ENCODE measurements at regions of chr1 and their contacts with region 1.

Region 1: DNA sequence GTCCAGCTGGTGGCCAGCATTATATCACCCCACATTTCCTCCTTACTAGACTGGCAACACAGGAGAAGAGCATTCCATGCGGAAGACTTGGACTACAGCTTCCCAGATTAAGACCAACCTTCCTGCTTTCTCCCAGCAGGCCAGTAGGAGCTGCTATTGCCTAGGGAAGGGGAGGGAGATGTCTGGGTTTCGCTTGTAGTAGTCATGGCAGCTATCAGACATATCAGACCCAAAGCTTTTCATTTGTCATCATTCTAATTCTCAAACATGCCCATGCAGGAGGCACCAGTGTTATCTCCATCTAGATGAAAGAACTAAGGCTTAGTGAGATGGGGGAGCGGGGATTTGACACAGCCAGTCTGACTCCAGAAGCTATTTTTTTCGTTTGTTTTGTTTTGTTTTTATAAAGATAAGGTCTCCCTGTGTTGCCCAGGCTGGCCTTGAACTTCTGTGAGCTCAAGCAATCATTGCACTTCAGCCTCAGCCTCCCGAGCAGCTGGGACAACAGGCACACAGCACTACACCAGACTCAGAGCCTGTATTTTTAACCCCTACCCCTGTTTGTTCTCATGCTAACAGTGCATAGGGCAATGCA is 4.5 kb downstream of the PLA2G2A start:
- DNase-seq: peak; percentile 86
- H3K4me3 ChIP-seq: no peak overlapping the region
- H3K27ac ChIP-seq: no peak overlapping the region
- H3K4me1 ChIP-seq: peaks cover 6% of the 10 kb centered on the region
- H3K27me3 ChIP-seq: no peaks in the 10 kb centered on the region
- CTCF ChIP-seq: peak; percentile 100

Region 2: DNA sequence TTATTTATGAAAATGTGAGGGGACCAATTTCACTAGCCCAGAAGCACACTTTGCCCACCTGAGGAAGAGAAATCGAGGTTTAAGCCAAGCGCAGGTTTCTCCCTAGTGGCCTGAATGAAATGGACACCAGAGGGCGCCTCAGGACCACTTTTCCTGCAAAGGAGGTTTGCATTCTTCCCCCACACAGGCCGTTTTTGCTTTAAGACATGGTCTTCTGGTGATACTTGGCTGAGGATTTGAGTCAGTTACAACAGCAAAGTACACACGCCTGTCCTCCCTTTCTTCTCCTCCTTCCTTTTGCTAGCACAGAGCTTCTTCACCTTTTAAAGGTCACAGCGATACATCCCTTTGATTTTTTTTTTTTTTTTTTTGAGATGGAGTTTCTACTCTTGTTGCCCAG is 56.9 kb before region 1 on chr1:
- CTCF ChIA-PET with region 1: no interaction called
- dilution Hi-C with region 1: no loop called
- in situ Hi-C with region 1: no loop called
- intact Hi-C with region 1: loop called (anchors 1 kb)
- DNase-seq: peak; percentile 60
- H3K4me3 ChIP-seq: no peak overlapping the region
- H3K27ac ChIP-seq: no peak overlapping the region
- H3K4me1 ChIP-seq: no peaks in the 10 kb centered on the region
- H3K27me3 ChIP-seq: no peaks in the 10 kb centered on the region
- CTCF ChIP-seq: peak; percentile 90 to 95

Region 3: GRCh38 chr1:20093940-20094391 is 119.0 kb after region 1 on chr1:
- CTCF ChIA-PET with region 1: no interaction called
- dilution Hi-C with region 1: no loop called
- in situ Hi-C with region 1: loop called in 1 of 2 experiments (anchors 10 kb)
- intact Hi-C with region 1: no loop called
- DNase-seq: no peak
- H3K4me3 ChIP-seq: no peak overlapping the region
- H3K27ac ChIP-seq: no peak overlapping the region
- H3K4me1 ChIP-seq: no peaks in the 10 kb centered on the region
- H3K27me3 ChIP-seq: no peaks in the 10 kb centered on the region
- CTCF ChIP-seq: no peak

Region 4: DNA sequence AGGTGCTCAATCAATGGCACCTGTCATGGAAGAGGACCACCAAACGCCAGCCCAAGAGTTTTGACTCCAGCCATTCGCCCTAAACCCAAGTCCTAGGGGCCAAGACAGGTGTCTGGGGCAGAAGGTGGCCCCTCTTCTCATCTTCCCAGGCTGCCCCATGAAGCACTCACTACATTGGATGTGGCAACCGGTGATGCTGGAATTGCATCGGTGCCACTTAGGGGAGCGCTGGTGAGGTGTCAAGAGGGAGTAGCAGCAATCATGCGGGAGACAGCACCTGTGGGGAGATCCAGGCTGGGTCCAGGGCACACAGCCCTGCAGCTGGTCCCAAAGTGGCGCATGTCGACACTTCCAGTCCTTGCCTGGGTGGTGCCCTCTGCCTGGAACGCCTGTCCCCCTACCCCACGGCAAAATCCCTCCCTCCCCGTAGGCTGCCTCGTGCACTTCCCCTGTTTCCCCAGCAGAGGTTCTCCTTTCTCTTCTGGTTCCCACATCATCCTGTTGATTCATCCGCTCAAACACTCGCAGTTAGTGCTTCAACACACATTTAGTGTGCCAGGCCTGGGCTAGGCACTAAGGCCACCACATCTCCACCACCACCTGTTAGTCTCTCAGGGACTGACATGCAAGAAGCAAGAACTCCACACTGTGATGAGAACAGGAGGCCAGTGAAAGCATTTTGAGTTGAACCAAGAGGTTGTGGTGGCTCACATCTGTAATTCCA is 125.9 kb after region 1 on chr1:
- CTCF ChIA-PET with region 1: no interaction called
- dilution Hi-C with region 1: no loop called
- in situ Hi-C with region 1: loop called in 1 of 2 experiments (anchors 10 kb)
- intact Hi-C with region 1: loop called (anchors 1 kb)
- DNase-seq: peak; percentile 57
- H3K4me3 ChIP-seq: no peak overlapping the region
- H3K27ac ChIP-seq: no peak overlapping the region
- H3K4me1 ChIP-seq: peaks cover 12% of the 10 kb centered on the region
- H3K27me3 ChIP-seq: no peaks in the 10 kb centered on the region
- CTCF ChIP-seq: peak; percentile 86 to 93

Measured in mammary epithelial cell (primary cell).